HEK293 (cell line): ENCODE measurements at regions of chr4 and their contacts with region 1.

Region 1: GRCh38 chr4:7987148-7987989 is 47.7 kb upstream of the AFAP1 start:
- H3K4me3 ChIP-seq: no peak overlapping the region
- H3K27ac ChIP-seq: no peak overlapping the region
- H3K4me1 ChIP-seq: no peaks in the 10 kb centered on the region
- CTCF ChIP-seq: peak; percentile 53; the same call in 1 of the 2 replicates

Region 2: DNA sequence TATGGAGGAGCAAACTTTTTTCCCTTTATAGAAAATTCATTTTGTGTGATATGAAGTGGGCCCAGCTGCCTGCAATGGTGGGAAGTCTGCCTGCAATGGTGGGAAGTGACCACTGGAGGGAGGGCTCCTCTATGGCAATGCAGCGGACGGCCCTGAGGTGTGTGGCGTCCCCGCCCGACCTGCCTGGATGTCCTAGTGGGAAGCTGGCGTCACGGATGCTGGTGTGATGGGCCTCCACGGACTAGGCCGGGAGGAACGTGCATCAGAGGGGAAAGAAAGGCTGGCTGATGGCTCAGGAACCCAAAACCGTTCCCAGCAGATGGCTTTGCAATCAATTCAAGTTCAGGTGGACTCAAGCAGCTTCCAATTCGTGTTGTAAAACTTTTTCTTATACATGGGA is 225.6 kb before region 1 on chr4:
- CTCF ChIA-PET with region 1: interaction called, 13 read pairs
- POLR2A ChIA-PET with region 1: no interaction called
- H3K4me3 ChIP-seq: no peak overlapping the region
- H3K27ac ChIP-seq: no peak overlapping the region
- H3K4me1 ChIP-seq: no peaks in the 10 kb centered on the region; the same call in 1 of the 2 replicates
- CTCF ChIP-seq: no peak